Heart left ventricle (tissue), 16 donors: ENCODE measurements at regions of chr2 and their contacts with region 1.

Region 1: DNA sequence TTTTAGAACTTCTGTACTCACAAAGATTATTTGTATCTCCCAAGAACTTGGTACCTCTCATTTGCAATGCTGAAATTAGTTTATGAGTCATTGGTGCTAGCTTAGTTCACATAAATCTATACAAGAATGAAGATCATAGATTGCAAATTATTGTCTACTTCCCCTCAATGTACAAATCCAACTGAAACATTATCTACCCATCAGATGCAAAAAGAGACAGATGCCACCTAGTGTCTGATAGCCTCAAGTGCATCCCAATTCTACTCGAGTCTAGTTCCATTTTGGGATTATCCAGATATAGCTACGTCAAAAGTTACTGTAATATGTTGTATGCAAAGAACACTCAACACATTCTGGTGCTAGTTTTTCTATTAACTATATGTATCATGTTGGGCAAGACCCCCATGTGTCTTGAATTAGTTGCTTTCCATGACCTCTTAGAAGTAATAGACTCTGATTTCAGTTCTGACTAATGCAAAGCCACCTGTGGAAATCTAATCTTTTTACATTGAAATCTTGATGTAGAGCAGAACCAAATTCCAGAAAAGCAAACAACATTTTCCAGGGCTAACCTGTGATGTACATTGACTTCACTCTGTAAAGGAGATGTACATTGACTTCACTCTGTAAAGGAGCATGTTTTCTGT is 210.0 kb downstream of the RBM43 start:
- DNase-seq: peak in 1 of 5 donors; percentile 10
- ATAC-seq: peak in 1 of 4 donors; percentile 51
- H3K4me3 ChIP-seq: no peak overlapping the region
- H3K27ac ChIP-seq: no peak overlapping the region
- H3K4me1 ChIP-seq: no peaks in the 10 kb centered on the region
- H3K27me3 ChIP-seq: no peaks in the 10 kb centered on the region
- CTCF ChIP-seq: peak; percentile 52 to 84 (median 76)
- POLR2A ChIP-seq: no peak

Region 2: DNA sequence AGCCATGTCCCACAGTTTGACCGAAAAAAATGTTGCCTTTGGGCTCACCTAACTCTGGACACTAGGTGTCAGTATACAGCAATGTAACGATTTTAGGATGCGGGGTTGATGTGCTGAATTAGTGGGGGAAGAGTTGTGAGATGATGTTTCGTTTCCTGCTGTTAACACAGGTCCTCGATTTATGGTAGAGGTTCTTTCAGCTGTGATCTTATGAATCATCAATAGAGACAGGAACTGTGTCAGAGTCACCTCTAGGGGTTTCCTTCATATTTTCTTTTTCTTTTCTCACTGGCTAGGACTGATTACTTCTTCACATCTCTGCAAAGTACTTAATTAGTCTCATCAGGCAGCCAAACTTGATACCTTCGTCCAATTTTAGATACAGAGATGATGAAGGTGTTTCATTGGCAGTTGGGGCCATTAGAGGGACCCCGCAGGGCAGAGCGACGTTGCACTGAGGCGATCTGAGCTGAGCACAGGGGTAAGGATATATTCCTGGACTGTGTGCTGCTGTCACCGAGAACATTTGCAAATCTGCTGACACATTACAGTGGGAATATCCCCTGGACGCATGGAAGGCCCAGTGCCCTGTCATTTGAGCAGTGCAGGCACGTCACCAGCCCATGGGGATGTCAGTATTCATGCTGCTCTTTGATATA is 1453.9 kb before region 1 on chr2:
- intact Hi-C with region 1: loop called in 7 of 10 experiments (anchors 5 to 10 kb)
- DNase-seq: peak in 2 of 5 donors; percentile 16 to 23
- ATAC-seq: peak; percentile 73 to 97 (median 92)
- H3K4me3 ChIP-seq: peak overlapping the region in 9 of 12 donors; percentile 20 to 53 (median 33)
- H3K27ac ChIP-seq: no peak overlapping the region
- H3K4me1 ChIP-seq: peaks cover 0 to 11% (median 0%) of the 10 kb centered on the region in 12 donors
- H3K27me3 ChIP-seq: no peaks in the 10 kb centered on the region
- CTCF ChIP-seq: peak; percentile 67 to 88 (median 78)
- POLR2A ChIP-seq: no peak

Region 3: DNA sequence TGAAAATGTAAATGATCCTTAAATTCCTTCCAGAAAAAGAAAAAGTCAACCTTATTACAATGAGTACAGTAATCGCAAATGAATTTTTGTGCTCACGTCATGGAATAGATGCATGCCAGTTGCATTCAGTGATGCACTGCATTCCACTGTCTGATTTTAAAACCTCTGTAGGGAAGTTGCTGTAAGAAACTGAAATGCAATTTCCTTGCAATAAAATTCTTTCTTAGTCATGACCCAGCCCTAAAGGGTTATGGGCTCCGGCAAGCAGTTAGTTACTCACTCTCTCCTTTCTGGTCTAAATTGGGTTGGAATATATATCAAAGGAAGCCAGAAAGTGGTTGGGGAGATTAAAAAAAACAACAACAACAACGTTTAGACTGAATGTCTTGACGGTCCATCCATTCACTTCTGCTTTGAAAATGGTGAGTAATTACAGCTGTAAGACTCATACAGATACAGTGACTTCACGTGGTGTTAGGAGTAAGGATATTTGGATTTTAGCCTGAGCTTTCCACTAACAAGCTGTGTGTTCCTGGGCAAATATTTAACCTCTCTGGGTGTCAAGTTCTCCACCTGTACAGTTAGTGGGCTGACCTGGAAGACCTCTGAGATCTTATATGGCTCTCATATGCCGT is 555.6 kb before region 1 on chr2:
- intact Hi-C with region 1: loop called in 1 of 10 experiments (anchors 10 kb)
- DNase-seq: no peak
- ATAC-seq: no peak
- H3K4me3 ChIP-seq: no peak overlapping the region
- H3K27ac ChIP-seq: no peak overlapping the region
- H3K4me1 ChIP-seq: peaks cover 0 to 6% (median 0%) of the 10 kb centered on the region in 12 donors
- H3K27me3 ChIP-seq: no peaks in the 10 kb centered on the region
- CTCF ChIP-seq: no peak
- POLR2A ChIP-seq: no peak

Region 4: GRCh38 chr2:150963336-150963735 is 88.4 kb before region 1 on chr2:
- intact Hi-C with region 1: no loop called
- DNase-seq: no peak
- ATAC-seq: no peak
- H3K4me3 ChIP-seq: no peak overlapping the region
- H3K27ac ChIP-seq: no peak overlapping the region
- H3K4me1 ChIP-seq: no peaks in the 10 kb centered on the region
- H3K27me3 ChIP-seq: no peaks in the 10 kb centered on the region
- CTCF ChIP-seq: no peak
- POLR2A ChIP-seq: no peak

Region 5: GRCh38 chr2:151114874-151115273 is 63.2 kb after region 1 on chr2:
- intact Hi-C with region 1: no loop called
- DNase-seq: no peak
- ATAC-seq: no peak
- H3K4me3 ChIP-seq: no peak overlapping the region
- H3K27ac ChIP-seq: no peak overlapping the region
- H3K4me1 ChIP-seq: no peaks in the 10 kb centered on the region
- H3K27me3 ChIP-seq: no peaks in the 10 kb centered on the region
- CTCF ChIP-seq: no peak
- POLR2A ChIP-seq: no peak

Region 6: DNA sequence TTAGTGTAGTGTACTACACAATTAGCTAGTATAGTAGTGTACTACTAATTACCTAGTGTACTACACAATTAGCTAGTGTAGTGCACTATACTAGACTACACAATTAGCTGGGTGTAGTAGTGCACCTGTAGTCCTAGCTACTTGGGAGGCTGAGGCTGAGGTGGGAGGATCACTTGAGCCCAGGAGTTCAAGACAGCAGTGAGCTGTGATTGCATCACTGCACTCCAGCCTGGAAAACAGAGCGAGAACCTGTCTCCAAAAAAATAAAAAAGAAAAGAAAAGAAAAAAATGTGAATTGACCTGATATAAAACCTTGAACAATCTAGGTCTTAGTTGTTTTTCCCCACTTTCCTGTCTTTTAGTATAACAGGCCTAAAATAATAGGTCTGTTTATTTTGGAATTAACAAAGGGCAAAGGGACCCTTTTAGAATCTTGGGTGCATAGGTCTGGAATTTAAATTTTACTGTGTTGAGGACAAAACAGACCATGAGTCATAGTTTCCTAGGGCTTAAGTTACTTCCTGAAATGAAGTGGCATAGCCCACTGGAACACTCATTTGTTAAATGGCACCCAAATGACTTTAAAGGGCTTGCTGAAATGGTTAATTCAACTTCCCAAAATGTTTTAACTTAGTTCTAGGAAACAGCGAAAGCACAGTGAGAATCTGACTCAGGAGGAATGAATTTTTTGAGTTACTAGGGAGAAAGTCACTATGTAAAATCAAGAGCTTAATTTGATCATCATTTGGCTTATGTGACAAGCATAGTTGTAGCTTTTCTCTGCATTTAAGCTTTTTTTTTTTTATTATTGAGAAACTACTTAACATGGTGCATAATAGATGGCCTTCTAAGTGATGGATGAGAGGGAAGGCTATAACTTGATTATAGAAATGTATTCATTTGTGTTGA is 827.2 kb after region 1 on chr2:
- intact Hi-C with region 1: no loop called
- DNase-seq: no peak
- ATAC-seq: peak in 3 of 4 donors; percentile 42 to 68 (median 58)
- H3K4me3 ChIP-seq: no peak overlapping the region
- H3K27ac ChIP-seq: peak overlapping the region in 4 of 12 donors; percentile 8 to 53 (median 34)
- H3K4me1 ChIP-seq: peaks cover 0 to 18% (median 3%) of the 10 kb centered on the region in 12 donors
- H3K27me3 ChIP-seq: no peaks in the 10 kb centered on the region
- CTCF ChIP-seq: no peak
- POLR2A ChIP-seq: no peak